Activated CD4-positive, alpha-beta T cell treated with anti-CD3 and anti-CD28 coated beads for 36 hours (primary cell): ENCODE measurements at regions of chr16 and their contacts with region 1.

Region 1: DNA sequence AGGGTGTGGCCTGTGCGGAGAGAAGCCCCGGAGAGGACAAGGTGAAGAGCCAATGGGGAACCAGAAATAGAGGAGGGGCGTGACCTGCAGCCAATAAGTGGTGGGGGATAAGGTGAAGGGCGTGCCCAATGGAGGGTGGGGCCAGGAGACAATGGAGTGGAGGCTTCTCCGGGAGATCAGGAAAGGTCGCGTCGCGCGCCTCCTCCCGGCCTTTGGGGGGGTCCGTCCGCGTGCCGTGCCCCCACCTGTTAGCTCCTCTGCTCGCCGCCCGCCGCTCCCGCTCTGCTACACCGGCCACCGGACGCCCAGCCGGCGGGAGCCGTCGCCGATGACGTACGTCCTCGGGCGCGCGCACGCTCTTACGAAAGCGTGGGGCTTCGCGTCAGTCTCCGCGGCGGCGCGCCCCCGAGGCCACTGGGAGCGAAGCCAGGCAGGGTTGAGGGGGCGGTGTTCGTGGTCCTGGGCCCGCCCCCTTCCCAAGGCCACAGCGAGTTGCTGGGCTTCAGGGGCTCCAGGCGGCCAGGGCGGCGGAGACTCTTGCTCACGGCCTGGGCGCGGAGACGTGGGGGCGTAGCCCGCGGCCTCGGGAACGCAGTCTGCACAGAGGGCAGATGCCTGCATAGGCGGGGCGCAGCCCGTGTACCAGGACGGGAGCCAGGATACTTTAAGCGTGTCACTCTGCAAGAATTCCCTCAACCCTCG is at the start of gene MATCAP1:
- DNase-seq: peak; percentile 96
- ATAC-seq: peak; percentile 97
- H3K4me3 Mint-ChIP-seq: no peak within 1 kb of the TSS
- H3K27ac Mint-ChIP-seq: no peak within 1 kb of the TSS
- H3K4me1 Mint-ChIP-seq: peaks cover 15% of the 10 kb centered on the region
- H3K27me3 Mint-ChIP-seq: peaks cover 9% of the 10 kb centered on the region
- total RNA-seq, gene MATCAP1: 28.8 to 30.4 TPM

Region 2: DNA sequence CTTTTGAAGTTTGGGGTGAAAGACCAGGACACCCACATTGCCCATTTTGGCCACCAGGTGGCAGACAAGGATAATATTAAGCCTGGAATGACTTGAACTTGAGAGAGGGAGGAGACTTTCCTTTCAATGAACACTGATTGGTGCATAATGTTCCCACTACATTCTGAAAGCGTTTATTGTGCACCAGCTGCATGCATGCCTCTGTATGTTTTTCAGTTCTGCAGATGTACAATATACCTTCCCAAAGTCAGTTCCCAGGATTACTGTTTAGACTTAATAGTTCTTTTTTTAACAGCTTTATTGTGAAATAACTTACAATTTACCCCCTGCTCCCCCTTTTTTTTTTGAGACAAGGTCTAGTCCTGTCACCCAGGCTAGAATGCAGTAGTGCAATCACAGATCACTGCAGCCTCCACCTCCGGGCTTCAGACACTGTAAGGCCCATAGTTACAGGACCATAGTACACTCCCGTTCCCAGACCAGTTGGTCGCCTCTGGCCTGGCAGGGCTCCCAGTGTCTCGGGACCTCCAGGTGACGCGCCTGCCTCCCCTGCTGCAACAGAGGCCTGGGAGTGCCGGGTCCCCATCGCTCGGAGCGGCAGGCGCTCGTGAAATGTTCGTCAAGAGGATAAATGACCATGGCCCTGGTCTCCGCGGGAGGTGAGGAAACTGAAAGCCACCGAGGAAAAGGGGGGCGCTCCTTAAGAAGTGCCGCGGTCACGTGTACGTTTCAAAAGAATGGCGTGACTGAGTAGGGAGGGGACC is 236.3 kb before region 1 on chr16:
- CTCF ChIA-PET with region 1: interaction called, 5 read pairs
- POLR2A ChIA-PET with region 1: no interaction called
- intact Hi-C with region 1: loop called in 1 of 2 experiments (anchors 1 kb)
- DNase-seq: peak; percentile 92
- ATAC-seq: peak; percentile 92
- H3K4me3 Mint-ChIP-seq: peak overlapping the region; percentile 67
- H3K27ac Mint-ChIP-seq: no peak overlapping the region
- H3K4me1 Mint-ChIP-seq: peaks cover 22% of the 10 kb centered on the region
- H3K27me3 Mint-ChIP-seq: peaks cover 29% of the 10 kb centered on the region

Region 3: DNA sequence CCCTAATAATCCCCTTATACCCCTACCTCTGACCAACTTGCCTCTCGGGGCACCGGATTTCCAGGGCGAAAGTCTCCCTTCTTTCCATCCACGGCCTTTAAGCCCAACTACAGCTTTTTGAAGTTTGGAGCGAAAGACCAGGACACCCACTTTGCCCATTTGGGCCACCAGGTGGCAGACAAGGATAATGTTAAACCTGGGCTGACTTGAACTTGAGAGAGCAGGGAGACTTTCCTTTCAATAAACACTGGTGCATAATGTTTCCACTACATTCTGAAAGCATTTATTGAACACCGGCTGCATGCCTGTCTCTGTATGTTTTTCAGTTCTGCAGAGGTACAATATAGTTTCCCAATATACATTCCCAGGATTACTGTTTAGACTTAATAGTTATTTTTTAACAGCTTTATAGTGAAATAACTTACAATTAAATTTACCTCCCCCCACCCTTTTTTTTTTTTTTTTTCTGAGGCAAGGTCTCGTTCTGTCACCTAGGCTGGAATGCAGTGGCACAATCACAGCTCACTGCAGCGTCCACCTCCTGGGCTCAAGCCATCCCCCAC is 229.6 kb before region 1 on chr16:
- CTCF ChIA-PET with region 1: interaction called, 5 read pairs
- POLR2A ChIA-PET with region 1: no interaction called
- intact Hi-C with region 1: loop called in 1 of 2 experiments (anchors 1 kb)
- DNase-seq: peak; percentile 87
- ATAC-seq: peak; percentile 85
- H3K4me3 Mint-ChIP-seq: no peak overlapping the region
- H3K27ac Mint-ChIP-seq: no peak overlapping the region
- H3K4me1 Mint-ChIP-seq: peaks cover 9% of the 10 kb centered on the region
- H3K27me3 Mint-ChIP-seq: peaks cover 28% of the 10 kb centered on the region

Region 4: GRCh38 chr16:66977341-66978113 is 206.3 kb before region 1 on chr16:
- CTCF ChIA-PET with region 1: interaction called, 7 read pairs
- POLR2A ChIA-PET with region 1: no interaction called
- intact Hi-C with region 1: loop called (anchors 1 kb)
- DNase-seq: peak; percentile 96
- ATAC-seq: peak; percentile 97
- H3K4me3 Mint-ChIP-seq: no peak overlapping the region
- H3K27ac Mint-ChIP-seq: peak overlapping the region; percentile 31
- H3K4me1 Mint-ChIP-seq: peaks cover 31% of the 10 kb centered on the region
- H3K27me3 Mint-ChIP-seq: peaks cover 3% of the 10 kb centered on the region

Region 5: DNA sequence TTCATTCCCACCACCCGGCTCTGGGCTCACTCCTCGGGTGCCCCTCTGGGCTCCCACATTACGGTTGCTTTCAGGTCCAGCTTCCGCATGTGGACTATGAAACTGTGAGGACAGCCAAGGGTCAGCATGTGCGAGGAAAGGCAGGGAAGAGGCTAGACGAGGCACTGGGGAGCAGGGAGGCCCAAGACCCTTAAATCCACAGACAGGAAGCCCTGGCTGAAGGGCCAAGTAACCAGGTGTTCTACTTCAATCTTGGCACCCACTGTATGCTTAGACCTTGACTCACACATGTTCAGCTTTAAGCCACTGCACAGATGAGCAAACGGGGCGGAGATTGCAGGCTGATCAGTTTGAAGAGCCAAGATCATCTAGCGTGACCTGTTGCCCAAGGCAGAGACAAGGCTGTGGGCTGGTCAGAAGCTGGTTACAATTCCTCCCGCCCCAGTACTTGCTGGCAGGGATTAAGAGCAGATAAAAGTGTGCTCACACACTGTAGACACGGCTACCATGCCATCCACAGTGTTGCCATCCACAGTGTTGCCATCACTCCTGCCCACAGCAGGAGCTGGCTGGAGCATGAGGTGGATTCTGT is 195.5 kb before region 1 on chr16 and contains the start of gene CES4A:
- CTCF ChIA-PET with region 1: no interaction called
- POLR2A ChIA-PET with region 1: no interaction called
- intact Hi-C with region 1: loop called in 1 of 2 experiments (anchors 2 kb)
- DNase-seq: peak; percentile 47
- ATAC-seq: no peak
- H3K4me3 Mint-ChIP-seq: peak within 1 kb of the TSS; percentile 1
- H3K27ac Mint-ChIP-seq: peak within 1 kb of the TSS; percentile 75
- H3K4me1 Mint-ChIP-seq: peaks cover 30% of the 10 kb centered on the region
- H3K27me3 Mint-ChIP-seq: no peaks in the 10 kb centered on the region
- total RNA-seq, gene CES4A: 13.5 to 15.7 TPM

Region 6: GRCh38 chr16:67109407-67110135 is 74.2 kb before region 1 on chr16 and contains the start of gene PHAF1:
- CTCF ChIA-PET with region 1: no interaction called
- POLR2A ChIA-PET with region 1: no interaction called
- intact Hi-C with region 1: loop called in 1 of 2 experiments (anchors 1 kb)
- DNase-seq: peak; percentile 98
- ATAC-seq: peak; percentile 94
- H3K4me3 Mint-ChIP-seq: peak within 1 kb of the TSS; percentile 94
- H3K27ac Mint-ChIP-seq: peak within 1 kb of the TSS; percentile 85
- H3K4me1 Mint-ChIP-seq: peaks cover 24% of the 10 kb centered on the region
- H3K27me3 Mint-ChIP-seq: no peaks in the 10 kb centered on the region
- total RNA-seq, gene PHAF1: 12.7 to 14.0 TPM

Region 7: GRCh38 chr16:67198238-67198734 is 14.5 kb after region 1 on chr16:
- CTCF ChIA-PET with region 1: no interaction called
- POLR2A ChIA-PET with region 1: no interaction called
- intact Hi-C with region 1: no loop called
- DNase-seq: peak; percentile 48
- ATAC-seq: peak; percentile 74
- H3K4me3 Mint-ChIP-seq: no peak overlapping the region
- H3K27ac Mint-ChIP-seq: peak overlapping the region; percentile 49
- H3K4me1 Mint-ChIP-seq: peaks cover 21% of the 10 kb centered on the region
- H3K27me3 Mint-ChIP-seq: no peaks in the 10 kb centered on the region

Region 8: GRCh38 chr16:67719048-67719777 is 535.4 kb after region 1 on chr16 and contains the start of gene GFOD2:
- CTCF ChIA-PET with region 1: no interaction called
- POLR2A ChIA-PET with region 1: no interaction called
- intact Hi-C with region 1: loop called in 1 of 2 experiments (anchors 1 kb)
- DNase-seq: peak; percentile 99
- ATAC-seq: peak; percentile 95
- H3K4me3 Mint-ChIP-seq: peak within 1 kb of the TSS; percentile 82
- H3K27ac Mint-ChIP-seq: peak within 1 kb of the TSS; percentile 98
- H3K4me1 Mint-ChIP-seq: peaks cover 29% of the 10 kb centered on the region
- H3K27me3 Mint-ChIP-seq: no peaks in the 10 kb centered on the region
- total RNA-seq, gene GFOD2: 8.7 to 11.5 TPM